CD8-positive, alpha-beta T cell (primary cell): ENCODE measurements at regions of chr10 and their contacts with region 1.

Region 1: DNA sequence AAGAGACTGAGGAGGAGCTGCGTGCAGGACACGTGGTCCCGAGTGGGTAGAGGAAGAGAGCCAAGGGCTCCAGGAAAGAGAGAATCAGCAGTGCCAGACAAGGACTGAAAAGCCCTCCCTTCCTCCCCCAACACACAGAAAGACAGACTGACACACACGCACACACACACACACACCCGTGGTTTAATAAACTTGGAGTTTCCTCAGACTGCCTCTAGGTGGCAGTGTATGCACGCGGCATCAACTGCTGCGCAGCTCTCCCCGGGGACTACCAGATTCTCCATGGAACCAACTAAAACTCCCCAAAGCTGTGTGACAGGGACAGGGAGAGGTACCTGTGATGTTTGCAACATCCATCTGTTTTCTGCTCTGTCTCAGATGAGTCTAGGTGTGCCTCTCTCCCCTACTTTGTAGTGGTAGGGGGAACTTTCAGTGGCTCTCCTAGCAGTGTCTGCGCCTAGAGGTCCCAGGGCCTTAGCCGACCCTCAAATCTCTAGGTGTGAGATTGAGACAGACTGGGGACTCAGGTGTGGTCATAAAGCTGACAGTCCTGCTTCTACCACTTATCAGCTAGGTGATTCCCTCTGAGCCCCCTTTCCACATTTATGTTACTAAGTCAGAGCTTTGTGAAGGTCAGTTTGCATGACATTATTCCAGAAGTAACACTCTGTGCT is 9.3 kb upstream of the TSPAN14 start:
- DNase-seq: peak in 8 of 9 experiments; percentile 41 to 87 (median 65)
- ATAC-seq: peak; percentile 86
- H3K4me3 ChIP-seq: no peak overlapping the region
- H3K4me3 Mint-ChIP-seq: no peak overlapping the region
- H3K27ac ChIP-seq: no peak overlapping the region
- H3K27ac Mint-ChIP-seq: peak overlapping the region; percentile 79
- H3K4me1 ChIP-seq: peaks cover 42% of the 10 kb centered on the region
- H3K4me1 Mint-ChIP-seq: peaks cover 51% of the 10 kb centered on the region
- H3K27me3 ChIP-seq: no peaks in the 10 kb centered on the region
- H3K27me3 Mint-ChIP-seq: no peaks in the 10 kb centered on the region
- CTCF ChIP-seq: peak; percentile 42

Region 2: GRCh38 chr10:80382989-80383388 is 61.8 kb before region 1 on chr10:
- CTCF ChIA-PET with region 1: interaction called, 22 read pairs
- POLR2A ChIA-PET with region 1: no interaction called
- intact Hi-C with region 1: loop called (anchors 1 to 5 kb)
- DNase-seq: peak; percentile 11 to 77 (median 48)
- ATAC-seq: peak; percentile 77
- H3K4me3 ChIP-seq: no peak overlapping the region
- H3K4me3 Mint-ChIP-seq: no peak overlapping the region
- H3K27ac ChIP-seq: no peak overlapping the region
- H3K27ac Mint-ChIP-seq: peak overlapping the region; percentile 73
- H3K4me1 ChIP-seq: peaks cover 4% of the 10 kb centered on the region
- H3K4me1 Mint-ChIP-seq: peaks cover 15% of the 10 kb centered on the region
- H3K27me3 ChIP-seq: no peaks in the 10 kb centered on the region
- H3K27me3 Mint-ChIP-seq: no peaks in the 10 kb centered on the region
- CTCF ChIP-seq: peak; percentile 83

Region 3: GRCh38 chr10:80464557-80465450 is 20.0 kb after region 1 on chr10:
- CTCF ChIA-PET with region 1: interaction called, 312 read pairs
- POLR2A ChIA-PET with region 1: interaction called, 13 read pairs
- intact Hi-C with region 1: loop called in 1 of 2 experiments (anchors 1 kb)
- DNase-seq: peak in 3 of 9 experiments; percentile 32 to 60 (median 41)
- ATAC-seq: peak; percentile 2
- H3K4me3 ChIP-seq: peak overlapping the region; percentile 25 to 30
- H3K4me3 Mint-ChIP-seq: peak overlapping the region; percentile 77
- H3K27ac ChIP-seq: peak overlapping the region; percentile 49 to 81
- H3K27ac Mint-ChIP-seq: peak overlapping the region; percentile 98
- H3K4me1 ChIP-seq: peaks cover 94% of the 10 kb centered on the region
- H3K4me1 Mint-ChIP-seq: peaks cover 96% of the 10 kb centered on the region
- H3K27me3 ChIP-seq: no peaks in the 10 kb centered on the region
- H3K27me3 Mint-ChIP-seq: no peaks in the 10 kb centered on the region
- CTCF ChIP-seq: no peak

Region 4: DNA sequence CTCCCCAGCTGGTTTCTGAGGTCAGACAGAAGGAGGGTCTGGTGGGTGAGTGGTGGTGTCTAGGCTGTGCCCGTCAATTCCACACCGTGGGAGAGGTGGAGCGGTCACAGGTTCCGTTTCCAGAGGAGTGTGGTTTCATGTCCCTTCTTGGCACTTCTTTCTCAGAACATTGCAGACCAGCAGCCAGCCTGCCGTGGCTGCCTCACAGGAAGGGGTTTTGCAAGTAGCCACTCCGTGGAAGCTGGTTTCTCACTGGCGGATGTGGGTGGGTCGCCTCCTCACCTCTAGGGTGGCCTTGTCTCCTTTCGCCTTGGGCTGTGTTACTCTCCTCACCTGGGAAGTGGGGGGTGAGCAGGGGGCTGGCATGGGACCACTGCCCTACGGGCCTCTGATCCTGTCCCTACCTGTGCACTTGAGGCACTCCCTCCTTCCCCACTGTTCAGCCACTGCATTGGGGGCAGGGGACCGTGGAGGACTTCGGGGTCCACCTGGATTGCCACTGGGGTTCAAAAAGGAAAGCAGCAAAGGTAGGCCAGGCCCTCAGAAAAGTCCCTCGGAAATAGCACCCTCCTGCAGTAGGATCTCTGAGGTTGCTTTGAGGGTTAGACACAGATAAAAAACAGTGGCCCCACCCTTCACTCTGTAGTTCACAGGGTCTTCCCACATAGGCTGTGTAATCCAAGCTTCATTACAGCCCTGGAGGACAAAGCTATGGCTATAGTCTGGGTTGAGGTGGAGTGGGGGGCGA is 43.2 kb after region 1 on chr10:
- CTCF ChIA-PET with region 1: interaction called, 32 read pairs
- POLR2A ChIA-PET with region 1: interaction called, 20 read pairs
- intact Hi-C with region 1: no loop called
- DNase-seq: peak in 8 of 9 experiments; percentile 55 to 87 (median 74)
- ATAC-seq: peak; percentile 68
- H3K4me3 ChIP-seq: peak overlapping the region; percentile 15 to 29
- H3K4me3 Mint-ChIP-seq: peak overlapping the region; percentile 77
- H3K27ac ChIP-seq: peak overlapping the region; percentile 24 to 75
- H3K27ac Mint-ChIP-seq: peak overlapping the region; percentile 92
- H3K4me1 ChIP-seq: peaks cover 98% of the 10 kb centered on the region
- H3K4me1 Mint-ChIP-seq: peaks cover 96% of the 10 kb centered on the region
- H3K27me3 ChIP-seq: no peaks in the 10 kb centered on the region
- H3K27me3 Mint-ChIP-seq: no peaks in the 10 kb centered on the region
- CTCF ChIP-seq: no peak

Region 5: GRCh38 chr10:80552151-80552646 is 107.4 kb after region 1 on chr10:
- CTCF ChIA-PET with region 1: no interaction called
- POLR2A ChIA-PET with region 1: no interaction called
- intact Hi-C with region 1: no loop called
- DNase-seq: no peak
- ATAC-seq: no peak
- H3K4me3 ChIP-seq: no peak overlapping the region
- H3K4me3 Mint-ChIP-seq: no peak overlapping the region
- H3K27ac ChIP-seq: no peak overlapping the region
- H3K27ac Mint-ChIP-seq: no peak overlapping the region
- H3K4me1 ChIP-seq: no peaks in the 10 kb centered on the region
- H3K4me1 Mint-ChIP-seq: no peaks in the 10 kb centered on the region
- H3K27me3 ChIP-seq: no peaks in the 10 kb centered on the region
- H3K27me3 Mint-ChIP-seq: peaks cover 10% of the 10 kb centered on the region
- CTCF ChIP-seq: no peak

Region 6: GRCh38 chr10:80580638-80581468 is 136.1 kb after region 1 on chr10:
- CTCF ChIA-PET with region 1: interaction called, 6 read pairs
- POLR2A ChIA-PET with region 1: no interaction called
- intact Hi-C with region 1: loop called in 1 of 2 experiments (anchors 2 kb)
- DNase-seq: no peak
- ATAC-seq: no peak
- H3K4me3 ChIP-seq: no peak overlapping the region
- H3K4me3 Mint-ChIP-seq: no peak overlapping the region
- H3K27ac ChIP-seq: no peak overlapping the region
- H3K27ac Mint-ChIP-seq: no peak overlapping the region
- H3K4me1 ChIP-seq: no peaks in the 10 kb centered on the region
- H3K4me1 Mint-ChIP-seq: no peaks in the 10 kb centered on the region
- H3K27me3 ChIP-seq: no peaks in the 10 kb centered on the region
- H3K27me3 Mint-ChIP-seq: peaks cover 9% of the 10 kb centered on the region
- CTCF ChIP-seq: no peak